GM12878 (cell line): ENCODE measurements at regions of chr12 and their contacts with region 1.

Region 1: GRCh38 chr12:26991826-26992225 is 22.4 kb downstream of the TM7SF3 start:
- DNase-seq: no peak
- ATAC-seq: no peak
- H3K4me3 ChIP-seq: no peak overlapping the region
- H3K27ac ChIP-seq: no peak overlapping the region
- H3K4me1 ChIP-seq: no peaks in the 10 kb centered on the region
- H3K27me3 ChIP-seq: no peaks in the 10 kb centered on the region
- CTCF ChIP-seq: no peak
- EP300 ChIP-seq: no peak
- POLR2A ChIP-seq: no peak
- RAD21 ChIP-seq: no peak

Region 2: GRCh38 chr12:26979733-26980132 is 12.1 kb before region 1 on chr12:
- CTCF ChIA-PET with region 1: interaction called, 13 read pairs
- POLR2A ChIA-PET with region 1: interaction called, 6 read pairs
- RAD21 ChIA-PET with region 1: no interaction called
- SMC1A ChIA-PET with region 1: interaction called, 5 read pairs
- in situ Hi-C with region 1: no loop called
- intact Hi-C with region 1: no loop called
- DNase-seq: no peak
- ATAC-seq: no peak
- H3K4me3 ChIP-seq: no peak overlapping the region
- H3K27ac ChIP-seq: no peak overlapping the region
- H3K4me1 ChIP-seq: no peaks in the 10 kb centered on the region
- H3K27me3 ChIP-seq: no peaks in the 10 kb centered on the region
- CTCF ChIP-seq: no peak
- EP300 ChIP-seq: no peak
- POLR2A ChIP-seq: no peak
- RAD21 ChIP-seq: no peak

Region 3: GRCh38 chr12:27488479-27488878 is 496.7 kb after region 1 on chr12:
- CTCF ChIA-PET with region 1: no interaction called
- POLR2A ChIA-PET with region 1: no interaction called
- RAD21 ChIA-PET with region 1: no interaction called
- SMC1A ChIA-PET with region 1: no interaction called
- in situ Hi-C with region 1: no loop called
- intact Hi-C with region 1: no loop called
- DNase-seq: no peak
- ATAC-seq: no peak
- H3K4me3 ChIP-seq: no peak overlapping the region
- H3K27ac ChIP-seq: no peak overlapping the region
- H3K4me1 ChIP-seq: no peaks in the 10 kb centered on the region
- H3K27me3 ChIP-seq: no peaks in the 10 kb centered on the region; a peak in 1 of 4 replicates
- CTCF ChIP-seq: no peak
- EP300 ChIP-seq: no peak
- POLR2A ChIP-seq: no peak
- RAD21 ChIP-seq: no peak